Common myeloid progenitor, CD34-positive (primary cell): ENCODE measurements at regions of chr12 and their contacts with region 1.

Region 1: GRCh38 chr12:4118017-4118510 is 155.5 kb upstream of the CCND2 start:
- DNase-seq: peak; percentile 84 to 97 (median 94)
- H3K4me3 ChIP-seq: peak overlapping the region in 5 of 7 experiments; percentile 1 to 60 (median 30)
- H3K27ac ChIP-seq: peak overlapping the region in 1 of 2 experiments; percentile 11
- H3K4me1 ChIP-seq: peaks cover 23 to 73% (median 71%) of the 10 kb centered on the region in 4 experiments
- H3K27me3 ChIP-seq: no peaks in the 10 kb centered on the region

Region 2: GRCh38 chr12:3987571-3987970 is 130.5 kb before region 1 on chr12:
- CTCF ChIA-PET with region 1: no interaction called
- POLR2A ChIA-PET with region 1: no interaction called
- DNase-seq: no peak
- H3K4me3 ChIP-seq: no peak overlapping the region
- H3K27ac ChIP-seq: no peak overlapping the region
- H3K4me1 ChIP-seq: peaks cover 0 to 12% (median 6%) of the 10 kb centered on the region in 4 experiments
- H3K27me3 ChIP-seq: no peaks in the 10 kb centered on the region

Region 3: DNA sequence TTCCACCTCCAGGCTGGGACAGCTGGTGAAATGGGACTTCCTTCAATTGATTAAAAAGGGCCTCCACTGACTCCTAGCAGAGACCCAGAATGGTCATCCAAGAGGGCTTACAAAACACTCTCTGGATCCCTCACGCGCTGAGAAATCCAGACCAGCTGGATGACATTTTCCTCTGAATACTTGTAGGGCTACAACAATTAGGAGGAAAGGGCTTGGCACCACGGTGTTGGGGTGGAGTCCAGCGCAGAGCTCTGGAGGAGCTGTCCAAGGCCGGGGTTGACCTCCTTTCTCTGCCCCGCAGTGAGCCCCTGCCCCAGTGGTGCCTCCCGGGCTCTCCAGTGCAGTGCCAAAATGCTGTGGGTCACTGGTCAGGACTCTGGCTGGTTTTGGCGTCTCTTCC is 33.5 kb before region 1 on chr12:
- CTCF ChIA-PET with region 1: no interaction called
- POLR2A ChIA-PET with region 1: no interaction called
- DNase-seq: no peak
- H3K4me3 ChIP-seq: no peak overlapping the region
- H3K27ac ChIP-seq: no peak overlapping the region
- H3K4me1 ChIP-seq: peaks cover 3 to 8% (median 4%) of the 10 kb centered on the region in 4 experiments
- H3K27me3 ChIP-seq: no peaks in the 10 kb centered on the region

Region 4: GRCh38 chr12:4107436-4107878 is 10.6 kb before region 1 on chr12:
- CTCF ChIA-PET with region 1: interaction called, 35 read pairs
- POLR2A ChIA-PET with region 1: interaction called, 3 read pairs
- DNase-seq: peak; percentile 89 to 96 (median 96)
- H3K4me3 ChIP-seq: peak overlapping the region in 2 of 7 experiments; percentile 11 to 48
- H3K27ac ChIP-seq: no peak overlapping the region
- H3K4me1 ChIP-seq: peaks cover 0 to 5% (median 2%) of the 10 kb centered on the region in 4 experiments
- H3K27me3 ChIP-seq: no peaks in the 10 kb centered on the region

Region 5: GRCh38 chr12:4269279-4269991 is 151.4 kb after region 1 on chr12:
- CTCF ChIA-PET with region 1: interaction called, 98 read pairs
- POLR2A ChIA-PET with region 1: interaction called, 15 read pairs
- DNase-seq: peak; percentile 93 to 95 (median 94)
- H3K4me3 ChIP-seq: peak overlapping the region; percentile 60 to 96 (median 88)
- H3K27ac ChIP-seq: peak overlapping the region; percentile 85 to 95
- H3K4me1 ChIP-seq: peaks cover 5 to 55% (median 40%) of the 10 kb centered on the region in 4 experiments
- H3K27me3 ChIP-seq: no peaks in the 10 kb centered on the region